PC-9 (cell line): ENCODE measurements at regions of chr9 and their contacts with region 1.

Region 1: DNA sequence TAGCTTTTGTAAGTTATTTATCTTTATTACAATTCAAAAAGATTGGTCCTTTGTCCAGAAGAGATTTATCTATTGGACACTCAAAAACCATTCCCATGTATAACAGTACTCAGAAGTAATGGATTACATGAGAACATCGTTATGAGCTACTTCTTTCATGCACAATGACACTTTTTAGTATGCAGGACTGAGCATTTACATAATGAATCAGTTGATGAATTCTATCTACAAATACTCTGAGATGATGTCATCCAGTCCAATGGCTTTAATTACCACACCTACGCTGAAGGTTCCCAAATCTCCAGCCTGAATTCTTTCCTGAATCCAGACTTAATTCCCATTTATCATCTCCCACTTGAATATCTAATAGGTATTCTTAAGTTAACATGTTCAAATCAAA is 75.3 kb downstream of the PTBP3 start:
- DNase-seq: no peak
- H3K4me3 ChIP-seq: no peak overlapping the region
- H3K27ac ChIP-seq: no peak overlapping the region
- H3K4me1 ChIP-seq: no peaks in the 10 kb centered on the region
- H3K27me3 ChIP-seq: no peaks in the 10 kb centered on the region
- CTCF ChIP-seq: no peak

Region 2: GRCh38 chr9:111668026-111668573 is 590.0 kb before region 1 on chr9:
- CTCF ChIA-PET with region 1: no interaction called
- POLR2A ChIA-PET with region 1: interaction called, 15 read pairs
- intact Hi-C with region 1: no loop called
- DNase-seq: no peak
- H3K4me3 ChIP-seq: no peak overlapping the region
- H3K27ac ChIP-seq: no peak overlapping the region
- H3K4me1 ChIP-seq: peaks cover 6% of the 10 kb centered on the region
- H3K27me3 ChIP-seq: no peaks in the 10 kb centered on the region
- CTCF ChIP-seq: no peak

Region 3: DNA sequence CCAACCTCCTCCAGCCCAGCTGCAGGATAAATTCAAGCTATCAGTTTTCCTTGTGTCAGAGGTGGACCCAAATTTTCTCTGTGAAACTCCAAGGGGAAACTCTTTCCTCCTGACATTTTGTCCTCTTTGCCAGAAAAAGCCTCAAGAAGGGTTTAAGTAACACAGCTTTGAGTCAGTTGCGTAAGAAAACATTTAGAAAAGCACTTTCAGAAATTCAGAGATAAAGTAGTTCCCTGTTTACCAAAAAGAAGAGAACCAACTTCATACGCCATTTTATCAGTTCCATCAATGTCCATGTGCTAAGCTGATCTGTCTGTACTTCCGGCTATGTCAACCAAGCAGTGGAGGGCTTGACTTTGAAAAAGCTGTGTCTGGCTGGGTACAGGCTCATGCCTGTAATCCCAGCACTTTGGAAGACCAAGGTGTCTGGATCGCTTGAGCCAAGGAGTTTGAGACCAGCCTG is 63.1 kb before region 1 on chr9:
- CTCF ChIA-PET with region 1: interaction called, 10 read pairs
- POLR2A ChIA-PET with region 1: no interaction called
- intact Hi-C with region 1: no loop called
- DNase-seq: no peak
- H3K4me3 ChIP-seq: no peak overlapping the region
- H3K27ac ChIP-seq: no peak overlapping the region
- H3K4me1 ChIP-seq: no peaks in the 10 kb centered on the region
- H3K27me3 ChIP-seq: no peaks in the 10 kb centered on the region
- CTCF ChIP-seq: no peak

Region 4: GRCh38 chr9:112241516-112241915 is 16.6 kb before region 1 on chr9:
- CTCF ChIA-PET with region 1: no interaction called
- POLR2A ChIA-PET with region 1: no interaction called
- intact Hi-C with region 1: no loop called
- DNase-seq: no peak
- H3K4me3 ChIP-seq: no peak overlapping the region
- H3K27ac ChIP-seq: no peak overlapping the region
- H3K4me1 ChIP-seq: peaks cover 7% of the 10 kb centered on the region
- H3K27me3 ChIP-seq: no peaks in the 10 kb centered on the region
- CTCF ChIP-seq: no peak